Activated naive CD4-positive, alpha-beta T cell treated with anti-CD3 and anti-CD28 coated beads for 36 hours (primary cell): ENCODE measurements at regions of chr4 and their contacts with region 1.

Region 1: GRCh38 chr4:142500974-142501373 is 345.1 kb downstream of the INPP4B start:
- DNase-seq: no peak
- H3K4me3 Mint-ChIP-seq: no peak overlapping the region
- H3K27ac Mint-ChIP-seq: no peak overlapping the region
- H3K4me1 Mint-ChIP-seq: peaks cover 9% of the 10 kb centered on the region
- H3K27me3 Mint-ChIP-seq: no peaks in the 10 kb centered on the region

Region 2: DNA sequence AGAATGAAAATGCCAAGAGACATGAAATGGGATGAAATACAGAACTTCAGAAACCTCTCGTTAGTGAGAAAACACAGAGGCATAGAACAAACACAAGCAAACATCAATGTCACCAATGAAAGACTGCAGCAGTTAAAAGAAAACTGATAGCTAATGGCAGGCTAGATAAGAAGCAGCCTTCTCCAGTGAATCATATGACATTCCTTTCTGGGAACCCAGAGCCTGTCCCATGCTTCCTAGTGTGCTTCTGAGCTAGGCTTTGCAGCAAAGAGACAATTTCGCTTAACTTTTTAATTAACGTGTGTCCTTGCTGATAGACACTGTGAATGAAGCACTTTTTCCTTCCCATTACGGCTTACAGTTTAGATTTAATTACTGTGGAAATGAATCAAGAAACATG is 419.9 kb before region 1 on chr4:
- CTCF ChIA-PET with region 1: no interaction called
- intact Hi-C with region 1: no loop called
- DNase-seq: no peak
- H3K4me3 Mint-ChIP-seq: no peak overlapping the region
- H3K27ac Mint-ChIP-seq: no peak overlapping the region
- H3K4me1 Mint-ChIP-seq: peaks cover 2% of the 10 kb centered on the region
- H3K27me3 Mint-ChIP-seq: no peaks in the 10 kb centered on the region

Region 3: GRCh38 chr4:142523111-142523510 is 22.1 kb after region 1 on chr4:
- CTCF ChIA-PET with region 1: interaction called, 3 read pairs
- intact Hi-C with region 1: loop called (anchors 1 kb)
- DNase-seq: no peak
- H3K4me3 Mint-ChIP-seq: no peak overlapping the region
- H3K27ac Mint-ChIP-seq: no peak overlapping the region
- H3K4me1 Mint-ChIP-seq: peaks cover 12% of the 10 kb centered on the region
- H3K27me3 Mint-ChIP-seq: no peaks in the 10 kb centered on the region

Region 4: DNA sequence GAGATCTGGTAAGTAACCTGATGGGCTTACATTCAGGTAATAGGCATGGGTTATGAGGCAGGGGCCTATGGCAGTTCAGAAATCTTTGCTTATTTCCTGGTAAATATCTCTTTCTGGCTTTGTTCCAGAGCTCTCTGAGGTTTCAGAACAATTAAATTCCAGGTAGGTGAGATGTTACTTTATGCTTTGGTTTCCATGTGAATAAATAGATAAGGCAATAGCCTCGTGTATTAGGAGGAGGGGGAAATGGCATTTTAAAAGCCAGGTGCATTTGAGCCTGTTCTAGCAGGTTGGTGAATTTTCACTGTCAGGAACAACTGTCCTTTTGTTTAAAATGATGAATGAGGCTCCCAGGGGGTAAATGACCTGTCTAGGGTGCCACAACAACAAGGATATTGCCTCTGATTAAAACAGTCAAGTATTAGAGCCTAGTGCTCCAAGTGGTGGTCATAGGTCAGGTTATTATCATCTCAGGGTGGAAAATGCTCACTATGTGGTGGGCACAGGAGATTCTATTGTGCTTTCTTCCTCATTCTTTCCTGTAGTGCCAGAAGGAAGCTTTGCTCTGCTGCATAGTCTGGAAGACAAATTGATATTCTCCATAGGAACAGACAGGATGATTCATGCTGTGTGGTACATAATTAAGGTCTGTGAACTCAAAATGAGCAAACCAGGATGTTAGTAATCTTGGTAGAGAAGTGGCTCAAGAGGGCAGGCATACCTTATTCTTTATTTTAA is 48.9 kb after region 1 on chr4:
- CTCF ChIA-PET with region 1: no interaction called
- intact Hi-C with region 1: no loop called
- DNase-seq: no peak
- H3K4me3 Mint-ChIP-seq: no peak overlapping the region
- H3K27ac Mint-ChIP-seq: peak overlapping the region; percentile 60
- H3K4me1 Mint-ChIP-seq: peaks cover 71% of the 10 kb centered on the region
- H3K27me3 Mint-ChIP-seq: no peaks in the 10 kb centered on the region